Endothelial cell of umbilical vein (primary cell): ENCODE measurements at regions of chr9 and their contacts with region 1.

Region 1: GRCh38 chr9:21110708-21111576 is 30.7 kb downstream of the IFNW1 start:
- DNase-seq: peak; percentile 74
- H3K4me3 ChIP-seq: no peak overlapping the region
- H3K27ac ChIP-seq: no peak overlapping the region
- H3K4me1 ChIP-seq: no peaks in the 10 kb centered on the region
- H3K27me3 ChIP-seq: no peaks in the 10 kb centered on the region
- CTCF ChIP-seq: peak; percentile 57 to 58
- POLR2A ChIP-seq: no peak

Region 2: DNA sequence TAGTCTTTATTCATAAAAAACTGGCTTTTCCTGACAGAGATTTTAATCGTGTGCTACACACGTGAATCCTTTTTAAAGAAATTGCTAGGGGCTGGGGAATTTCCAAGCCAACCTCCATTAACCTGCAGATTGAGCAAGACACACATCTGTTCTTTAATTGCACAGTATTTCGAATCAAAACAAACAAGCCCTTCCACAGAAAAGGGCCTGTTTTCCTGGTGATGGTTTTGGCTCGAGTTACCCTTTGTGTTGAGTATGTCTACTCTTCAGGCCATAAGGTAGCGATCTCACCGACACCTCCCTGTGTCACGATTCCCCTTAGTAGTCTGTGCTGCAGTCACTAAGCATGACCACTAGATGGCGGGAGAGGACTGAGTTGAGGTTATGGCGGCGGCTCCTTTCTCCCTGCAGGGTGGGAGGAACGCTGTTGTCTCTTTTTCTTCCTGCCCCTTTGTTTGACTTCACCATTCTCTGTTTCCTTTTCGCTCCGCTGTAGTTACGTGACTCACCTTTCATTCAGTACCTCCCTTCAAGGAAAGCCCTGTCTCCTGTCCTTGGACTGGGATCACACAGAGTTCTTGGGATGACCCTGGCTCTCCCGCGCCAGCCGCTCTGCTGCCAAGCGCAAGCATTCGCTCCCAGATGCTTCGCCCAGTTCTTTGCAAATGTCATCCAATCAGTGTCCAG is 1185.0 kb before region 1 on chr9:
- CTCF ChIA-PET with region 1: interaction called, 24 read pairs
- POLR2A ChIA-PET with region 1: no interaction called
- dilution Hi-C with region 1: no loop called
- intact Hi-C with region 1: loop called (anchors 1 kb)
- DNase-seq: peak; percentile 74
- H3K4me3 ChIP-seq: peak overlapping the region; percentile 17 to 52 (median 26)
- H3K27ac ChIP-seq: no peak overlapping the region
- H3K4me1 ChIP-seq: peaks cover 5% of the 10 kb centered on the region
- H3K27me3 ChIP-seq: peaks cover 5 to 13% of the 10 kb centered on the region in 2 experiments
- CTCF ChIP-seq: peak; percentile 92 to 94
- POLR2A ChIP-seq: no peak

Region 3: DNA sequence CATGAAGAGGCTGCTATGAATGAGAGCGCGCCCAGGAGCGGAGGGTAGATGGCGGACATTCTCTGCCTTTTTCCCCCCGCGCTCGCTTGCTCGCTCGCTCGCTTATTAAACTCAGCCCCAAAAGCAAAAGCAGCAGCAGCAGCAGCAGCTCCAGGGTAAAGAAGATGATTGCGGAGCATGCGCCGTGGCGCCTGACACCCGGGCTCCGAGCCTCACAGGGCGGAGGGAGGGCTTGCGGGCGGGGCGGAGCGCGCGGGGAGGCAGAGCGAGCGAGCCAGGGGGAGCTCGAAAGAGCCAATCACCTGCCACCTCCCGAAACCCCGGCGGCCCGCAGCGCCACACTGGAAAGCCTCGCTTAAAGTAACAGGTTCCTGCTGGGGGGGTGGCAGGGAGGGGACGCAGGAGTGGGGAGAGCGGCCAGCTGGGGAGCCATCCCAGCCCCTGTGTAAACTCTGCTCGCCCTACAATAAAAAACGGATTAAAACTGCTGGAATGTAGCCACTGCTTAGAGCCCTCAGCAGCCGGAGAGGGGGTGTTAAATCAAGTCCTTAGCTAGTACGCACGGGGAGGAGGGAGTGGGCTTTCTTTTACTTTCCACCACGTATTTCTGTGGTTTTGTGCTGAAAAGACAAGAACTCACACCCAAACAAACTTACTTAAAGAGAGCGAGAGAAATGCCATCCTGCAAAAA is 488.5 kb before region 1 on chr9 and contains the start of gene MLLT3:
- CTCF ChIA-PET with region 1: interaction called, 44 read pairs
- POLR2A ChIA-PET with region 1: no interaction called
- dilution Hi-C with region 1: no loop called
- intact Hi-C with region 1: loop called (anchors 1 kb)
- DNase-seq: peak; percentile 96
- H3K4me3 ChIP-seq: peak within 1 kb of the TSS; percentile 43 to 81 (median 66)
- H3K27ac ChIP-seq: peak within 1 kb of the TSS; percentile 33
- H3K4me1 ChIP-seq: peaks cover 30% of the 10 kb centered on the region
- H3K27me3 ChIP-seq: no peaks in the 10 kb centered on the region
- CTCF ChIP-seq: peak in 1 of 2 donors; percentile 9
- POLR2A ChIP-seq: no peak
- total RNA-seq, gene MLLT3: 10.0 and 11.1 TPM in 2 replicates

Region 4: DNA sequence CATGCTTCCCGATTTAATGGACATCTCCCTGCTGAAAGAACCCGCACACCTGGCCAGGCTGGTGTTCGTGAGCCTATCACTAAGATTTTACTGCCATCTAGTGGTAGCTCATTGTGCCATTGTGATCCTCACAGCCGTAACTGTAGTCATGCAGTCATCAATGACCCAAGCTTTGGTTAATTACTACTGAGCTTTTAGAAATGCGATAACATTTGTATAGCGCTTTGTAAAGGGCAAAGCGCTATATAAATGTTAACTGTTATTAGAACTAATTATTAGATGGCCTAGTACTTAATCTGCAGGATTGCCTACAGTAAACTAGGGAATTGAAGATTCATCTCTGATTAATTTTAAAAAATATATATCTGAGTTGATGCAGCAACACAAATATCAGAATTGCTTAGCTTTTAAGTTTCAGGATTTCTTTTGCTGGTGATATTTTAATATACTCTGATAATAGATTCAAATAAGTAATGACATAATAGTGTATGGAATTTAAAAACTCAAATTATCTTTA is 169.7 kb before region 1 on chr9:
- CTCF ChIA-PET with region 1: interaction called, 109 read pairs
- POLR2A ChIA-PET with region 1: no interaction called
- dilution Hi-C with region 1: no loop called
- intact Hi-C with region 1: loop called (anchors 1 kb)
- DNase-seq: peak; percentile 74
- H3K4me3 ChIP-seq: no peak overlapping the region
- H3K27ac ChIP-seq: no peak overlapping the region
- H3K4me1 ChIP-seq: no peaks in the 10 kb centered on the region
- H3K27me3 ChIP-seq: no peaks in the 10 kb centered on the region
- CTCF ChIP-seq: peak; percentile 63 to 72
- POLR2A ChIP-seq: no peak

Region 5: DNA sequence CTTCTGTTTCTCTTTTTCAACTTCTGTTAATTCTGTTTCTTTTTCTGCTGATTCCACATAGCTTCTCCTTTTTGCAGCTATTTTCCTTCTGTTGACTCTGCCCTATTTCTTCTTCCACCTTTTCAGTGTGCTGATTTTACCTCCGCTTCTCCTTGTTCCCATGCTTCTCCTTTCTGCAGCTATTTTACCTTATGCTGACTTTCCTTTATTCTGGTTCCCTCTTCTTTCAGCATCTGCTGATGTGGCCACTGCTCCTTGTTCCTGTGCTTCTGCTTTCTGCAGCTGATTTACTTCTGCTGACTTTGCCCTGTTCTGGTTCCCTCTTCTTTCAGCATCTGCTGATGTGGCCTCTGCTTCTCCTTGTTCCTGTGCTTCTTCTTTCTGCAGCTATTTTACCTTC is 138.3 kb before region 1 on chr9:
- CTCF ChIA-PET with region 1: interaction called, 12 read pairs
- POLR2A ChIA-PET with region 1: no interaction called
- dilution Hi-C with region 1: no loop called
- intact Hi-C with region 1: no loop called
- DNase-seq: no peak
- H3K4me3 ChIP-seq: no peak overlapping the region
- H3K27ac ChIP-seq: no peak overlapping the region
- H3K4me1 ChIP-seq: no peaks in the 10 kb centered on the region
- H3K27me3 ChIP-seq: no peaks in the 10 kb centered on the region
- CTCF ChIP-seq: no peak
- POLR2A ChIP-seq: no peak

Region 6: DNA sequence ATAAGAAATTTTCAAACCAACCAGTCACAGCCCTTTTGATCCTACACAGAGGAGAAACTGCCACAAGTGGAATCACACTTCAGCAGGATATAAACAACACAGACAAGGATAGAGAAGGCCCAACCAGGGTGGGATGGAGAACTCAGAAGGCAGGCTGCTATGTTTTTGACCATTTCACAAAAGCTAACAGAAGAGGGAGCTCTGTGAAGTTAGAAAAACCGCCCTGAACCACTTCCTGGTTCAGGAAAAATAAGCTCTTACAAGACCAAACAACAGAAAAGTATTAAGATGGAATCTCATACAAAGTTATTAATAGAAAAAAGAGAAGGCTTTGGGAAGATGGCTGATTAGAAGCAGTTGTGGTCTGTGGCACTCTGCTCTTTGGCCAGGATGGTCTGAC is 32.2 kb before region 1 on chr9:
- CTCF ChIA-PET with region 1: interaction called, 11 read pairs
- POLR2A ChIA-PET with region 1: no interaction called
- dilution Hi-C with region 1: no loop called
- intact Hi-C with region 1: no loop called
- DNase-seq: no peak
- H3K4me3 ChIP-seq: no peak overlapping the region
- H3K27ac ChIP-seq: no peak overlapping the region
- H3K4me1 ChIP-seq: peaks cover 13% of the 10 kb centered on the region
- H3K27me3 ChIP-seq: peaks cover 2 to 8% of the 10 kb centered on the region in 2 experiments
- CTCF ChIP-seq: no peak
- POLR2A ChIP-seq: no peak